ENCODE measurements at regions of chr12 and their contacts with region 1.

Region 1: GRCh38 chr12:122888232-122888867 is 7.6 kb downstream of the VPS37B start:
- DNase-seq: no peak
- ATAC-seq: peak; percentile 79

Region 2: DNA sequence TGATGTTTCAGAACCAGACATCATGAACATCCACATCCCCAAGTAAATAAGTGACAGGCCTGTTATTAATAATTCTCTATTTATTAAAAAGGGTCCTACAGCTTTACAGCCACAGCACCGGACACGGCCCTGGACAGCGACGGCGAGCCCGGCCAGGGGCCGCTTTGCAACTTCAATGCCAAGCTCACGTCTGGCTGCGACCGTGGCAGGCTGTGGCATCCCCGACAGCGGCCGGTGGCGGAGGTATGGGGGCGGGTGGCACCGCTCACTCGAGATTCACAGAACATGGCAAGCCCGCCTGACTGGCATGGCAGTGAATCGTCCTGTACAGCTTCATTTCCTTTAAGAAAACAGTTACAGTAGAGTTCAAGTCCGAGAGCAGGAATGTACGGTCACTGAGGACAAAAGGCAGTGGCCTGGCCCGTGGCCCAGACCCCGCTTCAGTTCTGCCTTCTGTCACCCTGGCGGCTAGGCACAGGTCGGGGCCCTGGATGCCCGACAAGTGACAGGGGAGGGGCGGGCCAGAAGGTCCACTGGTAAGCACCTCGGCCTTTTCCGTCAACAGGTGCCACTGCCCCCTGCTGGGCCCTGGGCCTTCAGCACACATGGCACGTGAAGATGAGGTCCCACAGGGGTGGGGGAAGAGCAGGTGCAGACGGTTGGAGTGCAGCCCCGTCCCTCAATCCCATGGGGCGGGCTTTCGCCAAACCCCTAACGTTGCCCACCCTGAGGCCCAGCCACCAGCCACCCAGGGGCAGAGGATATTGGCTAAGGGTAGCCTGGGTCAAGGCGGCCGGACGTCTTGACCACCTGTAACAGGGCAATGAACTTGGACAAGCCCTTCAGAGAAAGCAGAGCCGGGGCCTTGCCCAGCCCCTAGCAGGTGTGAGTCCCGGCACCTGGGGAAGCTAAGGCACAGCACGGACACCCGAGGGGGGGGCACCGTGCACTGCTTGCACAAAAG is 22.8 kb before region 1 on chr12:
- intact Hi-C with region 1: loop called (anchors 1 kb)
- DNase-seq: peak; percentile 76
- ATAC-seq: peak; percentile 17

Region 3: GRCh38 chr12:122937622-122938091 is 49.3 kb after region 1 on chr12:
- intact Hi-C with region 1: no loop called
- DNase-seq: no peak
- ATAC-seq: no peak

Region 4: GRCh38 chr12:122974274-122974891 is 86.0 kb after region 1 on chr12:
- intact Hi-C with region 1: no loop called
- DNase-seq: peak; percentile 98
- ATAC-seq: peak; percentile 98

Region 5: DNA sequence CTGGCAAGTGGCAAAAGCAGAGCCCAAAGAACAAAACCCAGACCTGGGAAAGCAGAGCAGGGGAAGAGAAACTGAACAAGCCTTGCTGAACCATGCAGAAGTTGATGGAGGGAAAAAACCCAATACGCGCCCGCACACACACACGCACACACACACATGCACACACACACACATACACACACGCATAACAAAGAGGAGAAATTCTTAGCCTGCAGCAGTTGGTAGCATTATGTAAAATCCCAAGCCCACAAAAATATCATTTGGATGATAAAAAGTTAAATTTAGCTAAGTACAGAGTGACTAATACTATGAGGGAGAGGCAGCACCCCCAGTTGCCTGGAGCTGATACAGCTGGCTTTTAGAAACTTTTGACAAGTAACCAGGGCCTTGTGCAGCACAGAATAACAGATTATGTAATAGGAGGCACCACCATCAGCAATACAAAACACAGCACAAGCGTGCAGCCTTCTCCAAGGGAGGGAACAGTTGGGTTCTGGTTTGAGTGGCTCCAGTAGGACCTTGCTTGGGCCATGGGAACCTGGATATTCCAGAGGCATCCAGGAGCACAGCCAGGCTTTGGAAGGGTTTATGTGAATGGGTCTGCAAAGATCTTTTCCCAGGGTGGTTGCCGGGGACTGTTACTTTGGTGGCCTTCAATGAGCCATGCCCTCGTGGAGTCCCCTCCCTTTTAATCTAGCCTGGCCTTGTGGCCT is 227.2 kb after region 1 on chr12:
- intact Hi-C with region 1: no loop called
- DNase-seq: no peak
- ATAC-seq: peak; percentile 93

Measured in Right ventricle myocardium inferior (tissue), 1 donor.